K562 (cell line): ENCODE measurements at regions of chr2 and their contacts with region 1.

Region 1: GRCh38 chr2:39399570-39399969 is 37.5 kb downstream of the MAP4K3 start:
- DNase-seq: no peak
- ATAC-seq: no peak
- H3K4me3 ChIP-seq: no peak overlapping the region
- H3K27ac ChIP-seq: peak overlapping the region; percentile 17; the same call in 1 of the 3 replicates
- H3K4me1 ChIP-seq: peaks cover 13 to 22% of the 10 kb centered on the region in 2 experiments; a peak in 3 of 5 replicates
- H3K27me3 ChIP-seq: no peaks in the 10 kb centered on the region
- CTCF ChIP-seq: no peak
- EP300 ChIP-seq: no peak
- POLR2A ChIP-seq: no peak
- RAD21 ChIP-seq: no peak

Region 2: GRCh38 chr2:39411181-39411944 is 11.8 kb after region 1 on chr2:
- CTCF ChIA-PET with region 1: interaction called, 3 read pairs
- POLR2A ChIA-PET with region 1: interaction called, 10 read pairs
- in situ Hi-C with region 1: no loop called
- intact Hi-C with region 1: no loop called
- DNase-seq: peak in 1 of 4 experiments; percentile 38
- ATAC-seq: peak; percentile 33
- H3K4me3 ChIP-seq: no peak overlapping the region
- H3K27ac ChIP-seq: peak overlapping the region; percentile 55
- H3K4me1 ChIP-seq: peaks cover 0 to 41% of the 10 kb centered on the region in 2 experiments; a peak in 3 of 5 replicates
- H3K27me3 ChIP-seq: no peaks in the 10 kb centered on the region
- CTCF ChIP-seq: no peak; a peak in 1 of 6 replicates
- EP300 ChIP-seq: no peak
- POLR2A ChIP-seq: no peak
- RAD21 ChIP-seq: no peak

Region 3: GRCh38 chr2:39469807-39470206 is 70.2 kb after region 1 on chr2:
- CTCF ChIA-PET with region 1: no interaction called
- POLR2A ChIA-PET with region 1: no interaction called
- in situ Hi-C with region 1: no loop called
- intact Hi-C with region 1: no loop called
- DNase-seq: peak in 2 of 4 experiments; percentile 22 to 35
- ATAC-seq: peak; percentile 63
- H3K4me3 ChIP-seq: no peak overlapping the region
- H3K27ac ChIP-seq: no peak overlapping the region
- H3K4me1 ChIP-seq: peaks cover 7 to 25% of the 10 kb centered on the region in 2 experiments
- H3K27me3 ChIP-seq: no peaks in the 10 kb centered on the region
- CTCF ChIP-seq: no peak
- EP300 ChIP-seq: no peak; the same call in 1 of the 2 replicates
- POLR2A ChIP-seq: no peak
- RAD21 ChIP-seq: no peak